ENCODE measurements at regions of chr14 and their contacts with region 1.

Region 1: DNA sequence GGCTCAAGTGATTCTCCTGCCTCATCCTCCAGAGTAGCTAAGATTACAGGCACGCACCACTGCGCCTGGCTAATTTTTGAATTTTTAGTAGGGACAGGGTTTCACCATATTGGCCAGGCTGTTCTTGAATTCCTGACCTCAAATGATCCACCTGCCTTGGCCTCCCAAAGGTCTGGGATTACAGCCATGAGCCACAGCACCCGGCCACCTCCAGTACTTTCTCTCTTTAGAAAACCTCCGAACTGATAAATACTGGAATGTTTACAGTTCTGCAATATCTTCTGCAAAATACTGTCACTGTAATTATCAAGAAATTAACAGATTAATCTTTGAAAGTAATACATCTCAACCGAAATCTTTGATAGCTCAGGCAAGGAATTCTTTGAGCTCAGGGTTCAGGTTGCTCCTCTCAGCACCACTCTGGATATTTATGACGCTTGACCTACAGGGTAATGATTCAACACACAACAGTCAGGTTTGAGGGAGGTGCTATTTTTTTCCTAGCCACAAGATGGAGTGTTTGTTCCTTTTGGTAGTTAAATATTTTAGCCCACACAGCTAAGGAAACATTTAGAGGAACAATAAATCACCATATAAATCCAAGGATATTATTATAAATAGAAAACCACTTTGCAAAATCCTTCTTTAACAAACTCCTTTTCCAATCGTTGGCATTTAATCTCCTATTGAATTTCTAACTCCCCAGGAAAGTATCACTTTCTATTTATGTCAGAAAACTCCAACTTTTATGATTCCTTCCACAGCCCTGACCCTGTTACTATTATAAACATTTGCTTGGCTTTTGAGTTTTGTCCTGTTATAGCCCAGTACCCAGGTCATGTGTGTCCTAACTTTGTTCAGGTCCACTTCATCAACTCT is 48.6 kb upstream of the GTF2A1 start:
- DNase-seq: no peak
- H3K4me3 ChIP-seq: no peak overlapping the region
- H3K27ac ChIP-seq: no peak overlapping the region
- H3K4me1 ChIP-seq: peaks cover 3% of the 10 kb centered on the region
- H3K27me3 ChIP-seq: no peaks in the 10 kb centered on the region
- CTCF ChIP-seq: peak; percentile 39 to 82 (median 56)
- POLR2A ChIP-seq: no peak

Region 2: GRCh38 chr14:81455390-81455789 is 186.1 kb after region 1 on chr14:
- intact Hi-C with region 1: loop called (anchors 2 kb)
- DNase-seq: no peak
- H3K4me3 ChIP-seq: no peak overlapping the region
- H3K27ac ChIP-seq: no peak overlapping the region
- H3K4me1 ChIP-seq: peaks cover under 1% of the 10 kb centered on the region
- H3K27me3 ChIP-seq: no peaks in the 10 kb centered on the region
- CTCF ChIP-seq: no peak
- POLR2A ChIP-seq: no peak

Measured in vagina (tissue), 2 donors.